Gastrocnemius medialis (tissue), 4 donors: ENCODE measurements at regions of chr7 and their contacts with region 1.

Region 1: GRCh38 chr7:29921404-29922010 is 68.1 kb downstream of the SCRN1 start:
- DNase-seq: peak in 1 of 2 donors; percentile 28
- ATAC-seq: peak; percentile 82 to 87
- H3K4me3 ChIP-seq: no peak overlapping the region
- H3K27ac ChIP-seq: no peak overlapping the region
- H3K4me1 ChIP-seq: no peaks in the 10 kb centered on the region
- H3K27me3 ChIP-seq: no peaks in the 10 kb centered on the region
- CTCF ChIP-seq: peak; percentile 72 to 91 (median 83)
- POLR2A ChIP-seq: no peak

Region 2: DNA sequence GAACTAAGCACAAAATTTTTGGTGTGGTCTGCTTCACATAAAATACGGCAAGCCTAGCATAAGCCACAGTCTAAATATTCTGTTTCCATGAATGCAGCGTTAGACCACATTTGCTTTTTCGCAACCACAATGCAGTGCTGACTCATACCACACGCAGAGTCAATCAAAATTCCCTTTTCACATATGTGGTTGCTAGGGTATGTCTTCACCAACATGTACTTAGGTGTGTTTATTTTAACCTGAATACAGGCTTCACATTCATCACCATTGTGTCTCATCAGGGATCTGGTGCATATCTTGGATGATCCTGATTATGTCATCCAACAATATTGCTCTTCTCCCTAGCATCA is 636.1 kb before region 1 on chr7:
- in situ Hi-C with region 1: no loop called
- intact Hi-C with region 1: no loop called
- DNase-seq: no peak
- ATAC-seq: no peak
- H3K4me3 ChIP-seq: no peak overlapping the region
- H3K27ac ChIP-seq: no peak overlapping the region
- H3K4me1 ChIP-seq: no peaks in the 10 kb centered on the region
- H3K27me3 ChIP-seq: no peaks in the 10 kb centered on the region
- CTCF ChIP-seq: no peak
- POLR2A ChIP-seq: no peak

Region 3: GRCh38 chr7:29639881-29640595 is 281.5 kb before region 1 on chr7:
- in situ Hi-C with region 1: loop called in 1 of 4 experiments (anchors 25 kb)
- intact Hi-C with region 1: loop called (anchors 5 kb)
- DNase-seq: no peak
- ATAC-seq: no peak
- H3K4me3 ChIP-seq: no peak overlapping the region
- H3K27ac ChIP-seq: no peak overlapping the region
- H3K4me1 ChIP-seq: no peaks in the 10 kb centered on the region
- H3K27me3 ChIP-seq: no peaks in the 10 kb centered on the region
- CTCF ChIP-seq: no peak
- POLR2A ChIP-seq: no peak

Region 4: DNA sequence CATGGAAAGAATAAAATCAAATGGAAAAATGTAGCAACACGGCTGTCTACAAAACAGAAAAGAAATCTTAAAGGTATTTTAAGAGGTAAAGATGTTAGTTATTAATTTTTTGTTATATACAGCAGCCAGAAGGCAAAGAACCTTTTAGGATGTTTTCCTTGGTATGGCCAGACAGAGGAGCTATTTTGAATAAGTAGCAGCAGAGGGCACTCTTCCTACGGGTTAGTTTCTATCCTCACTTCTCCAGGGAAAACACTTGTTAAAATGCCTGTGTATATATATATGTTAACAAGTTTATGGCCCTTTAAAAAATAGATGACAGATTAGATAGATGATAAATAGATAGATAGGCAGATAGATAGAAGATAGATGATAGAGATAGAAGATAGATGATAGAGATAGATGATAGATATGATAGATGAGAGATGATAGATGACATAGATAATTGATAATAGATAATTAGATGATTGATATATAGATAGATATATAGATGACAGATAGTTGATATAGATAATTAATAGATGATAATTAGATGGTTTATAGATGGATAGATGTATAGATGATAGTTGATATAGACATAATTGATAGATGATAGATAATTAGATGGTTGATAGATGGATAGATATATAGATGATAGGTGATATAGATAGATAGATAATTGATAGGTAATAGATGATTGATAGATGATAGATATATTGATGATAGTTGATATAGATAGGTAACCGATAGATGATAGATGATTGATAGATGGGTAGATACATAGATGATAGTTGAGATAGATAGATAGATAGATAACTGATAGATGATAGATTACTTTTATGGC is 173.0 kb before region 1 on chr7:
- in situ Hi-C with region 1: loop called in 3 of 4 experiments (anchors 5 to 25 kb)
- intact Hi-C with region 1: loop called (anchors 1 kb)
- DNase-seq: no peak
- ATAC-seq: peak; percentile 82 to 93
- H3K4me3 ChIP-seq: no peak overlapping the region
- H3K27ac ChIP-seq: no peak overlapping the region
- H3K4me1 ChIP-seq: no peaks in the 10 kb centered on the region
- H3K27me3 ChIP-seq: no peaks in the 10 kb centered on the region
- CTCF ChIP-seq: peak in 4 of 5 experiments; percentile 27 to 66 (median 50)
- POLR2A ChIP-seq: no peak

Region 5: GRCh38 chr7:29764227-29764626 is 157.3 kb before region 1 on chr7:
- in situ Hi-C with region 1: loop called in 2 of 4 experiments (anchors 10 to 25 kb)
- intact Hi-C with region 1: loop called (anchors 2 kb)
- DNase-seq: peak in 1 of 2 donors; percentile 23
- ATAC-seq: peak; percentile 48 to 60
- H3K4me3 ChIP-seq: no peak overlapping the region
- H3K27ac ChIP-seq: no peak overlapping the region
- H3K4me1 ChIP-seq: peaks cover 10 to 20% of the 10 kb centered on the region in 2 donors
- H3K27me3 ChIP-seq: no peaks in the 10 kb centered on the region
- CTCF ChIP-seq: peak in 4 of 5 experiments; percentile 31 to 39 (median 34)
- POLR2A ChIP-seq: no peak

Region 6: GRCh38 chr7:29806208-29806994 is 115.1 kb before region 1 on chr7 and contains the start of gene WIPF3:
- in situ Hi-C with region 1: no loop called
- intact Hi-C with region 1: loop called (anchors 2 kb)
- DNase-seq: peak in 1 of 2 donors; percentile 56
- ATAC-seq: peak; percentile 55 to 59
- H3K4me3 ChIP-seq: peak within 1 kb of the TSS; percentile 59 to 82 (median 72)
- H3K27ac ChIP-seq: peak within 1 kb of the TSS; percentile 84 to 96 (median 94)
- H3K4me1 ChIP-seq: peaks cover 33 to 35% of the 10 kb centered on the region in 2 donors
- H3K27me3 ChIP-seq: no peaks in the 10 kb centered on the region
- CTCF ChIP-seq: peak in 2 of 5 experiments; percentile 19 to 29
- POLR2A ChIP-seq: peak; percentile 73 to 80
- total RNA-seq, gene WIPF3: 4.2 to 9.9 (median 8.3) TPM

Region 7: DNA sequence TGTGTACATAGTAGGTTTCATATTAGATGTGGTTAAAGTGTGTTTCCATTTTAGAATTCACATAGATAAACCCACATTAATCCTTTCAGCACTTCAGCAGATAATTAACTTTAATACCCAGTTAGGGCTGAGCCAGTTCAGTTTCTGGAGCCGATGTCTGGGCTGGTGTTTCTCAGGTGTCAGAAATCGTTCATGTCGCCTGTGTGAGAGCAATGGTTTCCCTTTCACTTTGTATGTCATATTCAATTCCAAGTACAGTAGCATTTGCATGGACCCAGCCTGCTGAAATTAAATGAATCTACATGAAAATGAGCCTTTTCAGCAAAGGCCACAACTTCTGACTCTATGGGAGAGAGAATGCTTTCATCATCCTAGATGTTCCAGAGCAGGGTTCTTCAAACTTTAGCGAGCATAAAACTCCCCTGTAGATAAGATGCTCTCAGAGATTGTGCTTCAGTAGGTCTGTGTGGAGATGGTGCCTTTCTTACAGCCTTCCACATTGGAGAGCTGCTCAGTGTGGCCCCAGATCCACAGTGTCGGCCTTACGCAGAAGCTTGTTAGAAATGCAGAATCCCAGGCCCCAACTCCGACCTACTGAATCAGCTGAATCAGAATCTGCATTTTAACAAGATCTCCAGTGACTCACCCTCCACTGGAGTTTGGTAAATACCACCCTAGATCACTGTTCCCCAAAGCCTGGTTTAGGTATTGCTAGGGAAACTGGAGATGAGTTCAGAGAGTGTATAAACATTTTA is 95.6 kb before region 1 on chr7:
- in situ Hi-C with region 1: no loop called
- intact Hi-C with region 1: no loop called
- DNase-seq: no peak
- ATAC-seq: peak in 1 of 2 donors; percentile 82
- H3K4me3 ChIP-seq: peak overlapping the region in 3 of 4 donors; percentile 5 to 41 (median 10)
- H3K27ac ChIP-seq: peak overlapping the region in 3 of 4 donors; percentile 11 to 54 (median 17)
- H3K4me1 ChIP-seq: peaks cover 15 to 16% of the 10 kb centered on the region in 2 donors
- H3K27me3 ChIP-seq: no peaks in the 10 kb centered on the region
- CTCF ChIP-seq: no peak
- POLR2A ChIP-seq: no peak

Region 8: DNA sequence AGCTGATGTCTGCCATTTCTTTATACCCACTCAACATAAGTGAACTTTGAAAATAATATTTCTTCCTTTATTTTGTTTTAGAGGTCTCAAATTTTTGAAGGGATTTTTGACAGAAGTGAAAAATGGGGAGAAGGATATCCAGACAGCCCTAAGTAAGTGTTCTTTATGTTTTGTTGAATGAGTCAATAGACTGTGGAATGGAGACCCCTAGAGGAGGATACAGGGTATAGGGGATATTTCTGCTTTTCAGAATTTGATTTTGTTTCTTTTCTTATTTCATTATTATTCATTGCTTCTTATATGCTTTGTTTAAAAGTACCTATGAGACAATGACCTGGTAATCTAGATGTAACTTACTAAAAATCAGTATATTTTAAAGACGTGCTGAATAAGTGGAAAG is 141.1 kb after region 1 on chr7:
- in situ Hi-C with region 1: no loop called
- intact Hi-C with region 1: loop called (anchors 10 kb)
- DNase-seq: no peak
- ATAC-seq: peak in 1 of 2 donors; percentile 66
- H3K4me3 ChIP-seq: no peak overlapping the region
- H3K27ac ChIP-seq: no peak overlapping the region
- H3K4me1 ChIP-seq: no peaks in the 10 kb centered on the region
- H3K27me3 ChIP-seq: no peaks in the 10 kb centered on the region
- CTCF ChIP-seq: peak in 2 of 5 experiments; percentile 28 to 49
- POLR2A ChIP-seq: no peak